PC-9 (cell line): ENCODE measurements at regions of chr17 and their contacts with region 1.

Region 1: GRCh38 chr17:66727639-66728570 is 107.0 kb upstream of the CACNG5 start:
- DNase-seq: peak in 1 of 2 experiments; percentile 40
- H3K4me3 ChIP-seq: no peak overlapping the region
- H3K27ac ChIP-seq: no peak overlapping the region
- H3K4me1 ChIP-seq: 0 out of 2 replicates have a peak, but pooled peaks cover 5% of the 10 kb centered on the region
- H3K27me3 ChIP-seq: no peaks in the 10 kb centered on the region
- CTCF ChIP-seq: peak; percentile 68

Region 2: GRCh38 chr17:66715745-66716156 is 12.2 kb before region 1 on chr17:
- CTCF ChIA-PET with region 1: no interaction called
- POLR2A ChIA-PET with region 1: no interaction called
- intact Hi-C with region 1: no loop called
- DNase-seq: peak; percentile 14 to 60
- H3K4me3 ChIP-seq: no peak overlapping the region
- H3K27ac ChIP-seq: no peak overlapping the region
- H3K4me1 ChIP-seq: peaks cover 14% of the 10 kb centered on the region
- H3K27me3 ChIP-seq: no peaks in the 10 kb centered on the region
- CTCF ChIP-seq: peak; percentile 83

Region 3: DNA sequence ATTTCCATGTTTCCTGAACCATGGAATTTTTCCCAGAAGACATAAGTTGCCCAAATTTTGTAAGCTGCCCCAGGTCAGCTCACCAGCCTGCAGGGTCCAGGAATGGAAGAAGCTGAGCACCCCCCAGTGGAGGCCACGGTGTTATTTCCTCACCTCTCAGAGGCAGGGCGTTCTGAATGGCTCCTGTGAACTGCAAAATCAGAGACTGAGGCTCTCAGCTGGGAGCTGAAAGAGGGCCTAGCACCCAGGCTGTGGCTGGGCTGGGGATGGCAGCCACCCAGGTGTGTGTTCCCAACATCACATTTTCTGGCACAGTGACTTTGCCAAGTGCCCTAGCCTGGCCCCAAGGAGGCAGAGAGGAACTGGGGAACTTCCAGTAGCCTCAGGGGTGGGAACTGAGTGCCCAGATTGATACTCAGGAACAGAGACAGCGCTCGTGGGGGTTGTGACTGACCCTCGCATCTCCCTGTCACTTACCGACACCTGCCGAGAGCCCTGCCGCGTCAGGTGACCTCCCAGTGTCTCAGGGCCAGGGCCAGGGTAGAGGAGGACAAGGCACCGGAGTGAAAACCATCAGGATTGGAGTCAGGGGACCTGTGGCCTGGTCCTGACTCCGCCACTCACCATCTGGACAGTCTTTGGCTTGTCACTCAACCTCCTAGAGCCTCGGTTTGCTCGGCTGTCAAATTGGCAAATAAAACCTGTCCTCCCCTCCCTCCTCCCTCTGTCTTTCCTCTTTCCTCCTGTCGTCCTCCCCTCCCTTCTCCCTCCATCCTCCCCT is 247.9 kb after region 1 on chr17:
- CTCF ChIA-PET with region 1: no interaction called
- POLR2A ChIA-PET with region 1: no interaction called
- intact Hi-C with region 1: loop called (anchors 5 kb)
- DNase-seq: peak in 1 of 2 experiments; percentile 37
- H3K4me3 ChIP-seq: no peak overlapping the region
- H3K27ac ChIP-seq: no peak overlapping the region
- H3K4me1 ChIP-seq: no peaks in the 10 kb centered on the region
- H3K27me3 ChIP-seq: no peaks in the 10 kb centered on the region
- CTCF ChIP-seq: peak; percentile 63

Region 4: GRCh38 chr17:67157732-67158639 is 430.1 kb after region 1 on chr17:
- CTCF ChIA-PET with region 1: interaction called, 3 read pairs
- POLR2A ChIA-PET with region 1: no interaction called
- intact Hi-C with region 1: loop called (anchors 2 kb)
- DNase-seq: no peak
- H3K4me3 ChIP-seq: no peak overlapping the region
- H3K27ac ChIP-seq: no peak overlapping the region
- H3K4me1 ChIP-seq: no peaks in the 10 kb centered on the region
- H3K27me3 ChIP-seq: no peaks in the 10 kb centered on the region
- CTCF ChIP-seq: peak; percentile 46; the same call in 1 of the 2 replicates